K562 (cell line): ENCODE measurements at regions of chr15 and their contacts with region 1.

Region 1: DNA sequence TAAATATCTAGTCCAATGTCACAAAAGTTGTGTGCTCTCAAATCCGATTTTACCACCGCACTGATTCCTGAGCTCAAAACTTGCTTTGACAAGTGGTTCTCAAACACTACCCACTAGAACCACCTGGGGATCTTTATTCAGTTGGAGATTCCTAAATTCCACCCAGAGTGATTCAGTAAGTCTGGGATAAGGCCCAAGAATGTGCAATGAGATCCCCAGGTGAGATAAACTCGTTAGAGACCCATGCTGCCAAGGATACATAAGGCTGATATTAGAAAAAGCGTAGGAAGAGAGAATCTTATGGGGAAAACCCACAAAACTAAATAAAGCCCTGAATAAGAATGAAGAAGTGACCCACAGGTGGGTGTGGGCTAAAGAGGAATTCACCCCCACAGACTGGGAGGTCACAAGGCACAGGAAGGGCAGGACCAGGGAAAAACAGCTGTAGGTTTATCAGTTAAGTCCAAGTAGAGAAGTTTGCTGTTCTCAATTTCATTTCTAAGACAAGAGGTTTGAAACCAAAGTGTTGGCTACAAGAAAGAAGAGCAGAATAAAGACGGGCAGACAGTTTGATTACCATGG is 11.5 kb upstream of the RPS17 start:
- DNase-seq: no peak
- ATAC-seq: no peak
- H3K4me3 ChIP-seq: no peak overlapping the region
- H3K27ac ChIP-seq: no peak overlapping the region
- H3K4me1 ChIP-seq: peaks cover 12 to 16% of the 10 kb centered on the region in 2 experiments; a peak in 4 of 5 replicates
- H3K27me3 ChIP-seq: no peaks in the 10 kb centered on the region
- CTCF ChIP-seq: no peak
- EP300 ChIP-seq: no peak
- POLR2A ChIP-seq: no peak
- RAD21 ChIP-seq: no peak

Region 2: GRCh38 chr15:82540055-82540983 is 11.4 kb before region 1 on chr15 and contains the start of gene RPS17:
- CTCF ChIA-PET with region 1: no interaction called
- POLR2A ChIA-PET with region 1: interaction called, 95 read pairs
- in situ Hi-C with region 1: no loop called
- intact Hi-C with region 1: no loop called
- DNase-seq: peak; percentile 98 to 99 (median 98)
- ATAC-seq: peak; percentile 93
- H3K4me3 ChIP-seq: peak within 1 kb of the TSS; percentile 95
- H3K27ac ChIP-seq: peak within 1 kb of the TSS; percentile 93
- H3K4me1 ChIP-seq: peaks cover 10 to 17% of the 10 kb centered on the region in 2 experiments; a peak in 4 of 5 replicates
- H3K27me3 ChIP-seq: no peaks in the 10 kb centered on the region
- CTCF ChIP-seq: peak; percentile 96 to 98 (median 97)
- EP300 ChIP-seq: peak; percentile 25; the same call in 1 of the 2 replicates
- POLR2A ChIP-seq: peak; percentile 99
- RAD21 ChIP-seq: peak; percentile 45 to 57
- polyA plus RNA-seq, gene RPS17: 1,988 to 2,233 TPM

Region 3: DNA sequence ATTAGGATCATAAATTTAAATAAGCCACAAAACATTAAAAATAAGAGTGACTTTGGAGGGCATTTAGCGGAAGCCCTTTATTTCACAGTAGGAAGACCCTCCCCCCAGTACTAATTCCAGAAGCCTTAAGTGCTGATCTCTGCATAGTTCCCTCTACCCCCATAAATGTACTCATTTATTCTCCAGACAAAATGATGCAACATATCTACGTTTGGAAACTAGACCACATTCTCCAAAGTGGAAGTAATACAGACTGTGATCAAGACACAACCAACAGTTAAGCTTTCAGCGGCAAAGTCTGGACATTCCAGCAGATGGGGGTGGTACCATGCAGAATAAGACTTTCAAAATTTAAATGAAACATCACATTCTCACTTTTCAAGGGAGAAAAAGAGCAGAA is 33.3 kb after region 1 on chr15:
- CTCF ChIA-PET with region 1: no interaction called
- POLR2A ChIA-PET with region 1: no interaction called
- in situ Hi-C with region 1: no loop called
- intact Hi-C with region 1: no loop called
- DNase-seq: peak in 1 of 4 experiments; percentile 18
- ATAC-seq: peak; percentile 81
- H3K4me3 ChIP-seq: no peak overlapping the region
- H3K27ac ChIP-seq: no peak overlapping the region
- H3K4me1 ChIP-seq: no peaks in the 10 kb centered on the region
- H3K27me3 ChIP-seq: no peaks in the 10 kb centered on the region
- CTCF ChIP-seq: peak in 2 of 3 experiments; percentile 43 to 55; a peak in 4 of 6 replicates
- EP300 ChIP-seq: no peak
- POLR2A ChIP-seq: no peak
- RAD21 ChIP-seq: peak; percentile 50 to 60

Region 4: GRCh38 chr15:82919231-82919886 is 367.6 kb after region 1 on chr15:
- CTCF ChIA-PET with region 1: no interaction called
- POLR2A ChIA-PET with region 1: no interaction called
- in situ Hi-C with region 1: no loop called
- intact Hi-C with region 1: no loop called
- DNase-seq: no peak
- ATAC-seq: no peak
- H3K4me3 ChIP-seq: no peak overlapping the region
- H3K27ac ChIP-seq: no peak overlapping the region
- H3K4me1 ChIP-seq: no peaks in the 10 kb centered on the region
- H3K27me3 ChIP-seq: peaks cover 41 to 73% of the 10 kb centered on the region in 2 experiments
- CTCF ChIP-seq: no peak
- EP300 ChIP-seq: no peak
- POLR2A ChIP-seq: no peak
- RAD21 ChIP-seq: no peak